Naive thymus-derived CD4-positive, alpha-beta T cell (primary cell): ENCODE measurements at regions of chr20 and their contacts with region 1.

Region 1: DNA sequence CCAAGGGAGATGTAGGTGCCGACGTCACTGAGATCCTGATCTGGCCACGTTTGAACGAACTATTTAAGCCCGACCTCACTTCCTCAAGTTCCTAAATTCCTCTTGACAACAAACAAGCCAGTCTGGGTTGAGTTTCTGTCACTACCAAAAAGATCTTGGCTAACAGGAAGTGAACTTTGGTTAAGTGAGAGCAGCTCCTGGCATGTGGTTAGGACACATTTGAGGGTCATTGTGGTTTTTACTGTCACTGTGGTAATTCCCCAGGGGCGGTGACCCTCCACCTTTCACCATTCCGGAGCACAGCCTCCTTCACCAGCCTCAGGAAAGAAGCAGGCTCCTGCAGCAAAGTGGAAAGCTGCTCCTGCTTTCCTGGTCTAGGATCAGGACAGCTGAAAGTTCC is 43.1 kb upstream of the ZNF831 start:
- DNase-seq: peak in 7 of 9 donors; percentile 23 to 48 (median 35)
- ATAC-seq: peak; percentile 40
- H3K4me3 ChIP-seq: no peak overlapping the region
- H3K4me3 Mint-ChIP-seq: peak overlapping the region; percentile 33 to 96 (median 56)
- H3K27ac ChIP-seq: peak overlapping the region; percentile 94
- H3K27ac Mint-ChIP-seq: peak overlapping the region; percentile 64 to 100 (median 100)
- H3K4me1 ChIP-seq: peaks cover 60 to 84% of the 10 kb centered on the region in 2 donors
- H3K4me1 Mint-ChIP-seq: peaks cover 51 to 98% (median 90%) of the 10 kb centered on the region in 7 donors
- H3K27me3 ChIP-seq: no peaks in the 10 kb centered on the region
- H3K27me3 Mint-ChIP-seq: no peaks in the 10 kb centered on the region

Region 2: DNA sequence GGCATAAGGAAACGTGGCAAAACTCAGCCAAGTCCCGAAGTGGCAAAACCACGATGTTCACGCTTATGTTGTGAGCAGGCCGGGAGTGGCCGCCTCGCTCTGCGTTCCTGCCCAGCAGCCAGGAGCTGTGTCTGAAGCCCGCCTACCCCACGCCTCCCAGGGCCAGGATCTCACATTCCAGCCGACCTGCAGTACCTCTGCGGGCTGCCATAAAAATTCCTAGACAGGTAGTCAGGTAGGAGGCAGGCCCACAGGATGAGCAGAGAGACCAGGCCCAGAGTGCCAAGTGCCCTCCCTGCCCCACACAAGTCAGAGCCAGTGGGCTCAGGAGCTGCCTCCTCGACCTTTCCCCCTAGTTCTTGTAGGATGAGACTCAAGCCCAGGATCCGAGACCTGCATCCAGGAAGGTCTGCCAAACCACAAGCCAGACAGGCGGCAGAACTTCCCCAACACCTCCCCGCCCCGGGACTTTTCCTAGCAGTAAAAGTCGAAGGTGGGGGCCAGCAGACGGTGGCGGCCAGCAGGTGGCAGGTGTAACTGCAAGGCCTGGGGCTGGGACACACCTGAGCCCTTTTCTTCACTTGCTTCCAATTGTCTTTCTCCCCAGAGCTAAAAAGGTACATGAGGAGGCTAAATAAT is 1427.4 kb before region 1 on chr20:
- CTCF ChIA-PET with region 1: no interaction called
- POLR2A ChIA-PET with region 1: no interaction called
- intact Hi-C with region 1: no loop called
- DNase-seq: no peak
- ATAC-seq: no peak
- H3K4me3 ChIP-seq: no peak overlapping the region
- H3K4me3 Mint-ChIP-seq: no peak overlapping the region
- H3K27ac ChIP-seq: no peak overlapping the region
- H3K27ac Mint-ChIP-seq: peak overlapping the region in 1 of 9 donors; percentile 41
- H3K4me1 ChIP-seq: no peaks in the 10 kb centered on the region
- H3K4me1 Mint-ChIP-seq: peaks cover 0 to 38% (median 5%) of the 10 kb centered on the region in 7 donors
- H3K27me3 ChIP-seq: no peaks in the 10 kb centered on the region
- H3K27me3 Mint-ChIP-seq: peaks cover 0 to 4% (median 0%) of the 10 kb centered on the region in 5 donors

Region 3: DNA sequence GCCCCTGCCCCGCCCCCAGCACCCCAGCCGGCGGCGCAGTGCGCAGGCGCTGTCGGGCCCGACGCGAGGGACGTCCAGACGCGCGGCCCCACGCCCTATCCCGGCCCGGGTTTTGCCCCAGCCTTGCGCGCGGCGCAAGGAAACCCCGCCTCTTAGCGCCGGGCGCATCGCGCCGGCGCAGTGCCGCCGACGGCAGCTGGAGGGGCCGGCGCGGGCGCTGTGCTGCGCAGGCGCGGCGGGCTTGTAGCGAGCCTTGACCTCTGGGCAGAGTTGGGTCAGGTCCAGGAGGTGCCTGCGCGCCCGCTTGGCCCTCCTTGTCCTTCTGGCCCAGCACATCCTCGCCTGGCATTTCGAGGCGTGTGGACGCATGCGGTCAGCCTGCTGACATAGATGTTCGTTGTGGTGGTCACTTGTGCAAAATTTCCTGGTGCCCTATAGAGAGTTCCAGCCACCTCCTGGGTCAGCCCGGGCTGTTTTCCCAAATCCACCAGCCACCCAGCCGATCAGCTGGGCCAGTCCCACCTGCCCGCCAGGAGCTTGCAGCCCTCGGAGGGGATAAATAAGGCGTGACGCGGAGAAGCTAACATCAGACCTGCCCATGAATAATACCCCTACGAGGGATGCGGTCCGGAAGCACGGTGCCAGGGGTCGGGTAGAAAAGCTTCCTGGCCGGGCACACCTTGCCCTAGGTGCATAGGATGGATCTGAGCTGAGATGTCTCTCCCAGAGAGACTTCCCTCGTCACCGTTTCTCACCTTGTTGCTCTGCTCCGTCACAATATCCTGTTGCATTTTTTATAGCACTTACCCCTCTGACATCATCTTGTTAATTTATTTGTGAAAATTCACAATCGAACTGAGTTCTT is 77.5 kb before region 1 on chr20:
- CTCF ChIA-PET with region 1: no interaction called
- POLR2A ChIA-PET with region 1: interaction called, 3 read pairs
- intact Hi-C with region 1: loop called in 1 of 2 experiments (anchors 2 kb)
- DNase-seq: peak; percentile 90 to 98 (median 94)
- ATAC-seq: peak; percentile 98
- H3K4me3 ChIP-seq: peak overlapping the region; percentile 76
- H3K4me3 Mint-ChIP-seq: peak overlapping the region; percentile 81 to 96 (median 90)
- H3K27ac ChIP-seq: peak overlapping the region; percentile 93
- H3K27ac Mint-ChIP-seq: peak overlapping the region; percentile 76 to 96 (median 91)
- H3K4me1 ChIP-seq: peaks cover 30 to 32% of the 10 kb centered on the region in 2 donors
- H3K4me1 Mint-ChIP-seq: peaks cover 35 to 54% (median 50%) of the 10 kb centered on the region in 7 donors
- H3K27me3 ChIP-seq: no peaks in the 10 kb centered on the region
- H3K27me3 Mint-ChIP-seq: no peaks in the 10 kb centered on the region

Region 4: DNA sequence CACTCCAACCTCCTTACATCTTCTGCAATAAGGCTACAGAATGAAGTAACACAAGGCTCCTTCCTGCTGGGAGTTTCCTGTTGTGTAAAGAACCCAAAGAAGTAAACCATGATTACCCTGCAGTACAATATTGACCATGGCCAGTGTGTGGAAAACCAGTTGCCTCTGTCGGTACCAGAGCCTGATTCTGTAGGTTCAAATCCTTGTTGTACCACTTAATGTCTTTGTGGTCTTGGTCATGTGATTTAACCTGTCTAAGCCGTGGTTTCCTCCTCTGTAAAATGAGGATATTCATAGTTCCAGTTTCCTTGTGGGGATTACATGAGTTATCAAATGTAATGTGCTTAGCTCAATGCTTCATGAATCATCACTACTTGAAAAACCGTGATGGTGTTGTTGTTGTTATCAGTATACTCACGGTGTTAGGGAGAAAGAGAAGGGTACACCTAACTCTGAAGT is 17.6 kb before region 1 on chr20:
- CTCF ChIA-PET with region 1: interaction called, 3 read pairs
- POLR2A ChIA-PET with region 1: interaction called, 12 read pairs
- intact Hi-C with region 1: no loop called
- DNase-seq: no peak
- ATAC-seq: peak; percentile 40
- H3K4me3 ChIP-seq: no peak overlapping the region
- H3K4me3 Mint-ChIP-seq: no peak overlapping the region
- H3K27ac ChIP-seq: no peak overlapping the region
- H3K27ac Mint-ChIP-seq: peak overlapping the region in 2 of 9 donors; percentile 26 to 29
- H3K4me1 ChIP-seq: peaks cover 0 to 7% of the 10 kb centered on the region in 2 donors
- H3K4me1 Mint-ChIP-seq: peaks cover 12 to 27% (median 24%) of the 10 kb centered on the region in 7 donors
- H3K27me3 ChIP-seq: no peaks in the 10 kb centered on the region
- H3K27me3 Mint-ChIP-seq: peaks cover 0 to 19% (median 0%) of the 10 kb centered on the region in 5 donors

Region 5: DNA sequence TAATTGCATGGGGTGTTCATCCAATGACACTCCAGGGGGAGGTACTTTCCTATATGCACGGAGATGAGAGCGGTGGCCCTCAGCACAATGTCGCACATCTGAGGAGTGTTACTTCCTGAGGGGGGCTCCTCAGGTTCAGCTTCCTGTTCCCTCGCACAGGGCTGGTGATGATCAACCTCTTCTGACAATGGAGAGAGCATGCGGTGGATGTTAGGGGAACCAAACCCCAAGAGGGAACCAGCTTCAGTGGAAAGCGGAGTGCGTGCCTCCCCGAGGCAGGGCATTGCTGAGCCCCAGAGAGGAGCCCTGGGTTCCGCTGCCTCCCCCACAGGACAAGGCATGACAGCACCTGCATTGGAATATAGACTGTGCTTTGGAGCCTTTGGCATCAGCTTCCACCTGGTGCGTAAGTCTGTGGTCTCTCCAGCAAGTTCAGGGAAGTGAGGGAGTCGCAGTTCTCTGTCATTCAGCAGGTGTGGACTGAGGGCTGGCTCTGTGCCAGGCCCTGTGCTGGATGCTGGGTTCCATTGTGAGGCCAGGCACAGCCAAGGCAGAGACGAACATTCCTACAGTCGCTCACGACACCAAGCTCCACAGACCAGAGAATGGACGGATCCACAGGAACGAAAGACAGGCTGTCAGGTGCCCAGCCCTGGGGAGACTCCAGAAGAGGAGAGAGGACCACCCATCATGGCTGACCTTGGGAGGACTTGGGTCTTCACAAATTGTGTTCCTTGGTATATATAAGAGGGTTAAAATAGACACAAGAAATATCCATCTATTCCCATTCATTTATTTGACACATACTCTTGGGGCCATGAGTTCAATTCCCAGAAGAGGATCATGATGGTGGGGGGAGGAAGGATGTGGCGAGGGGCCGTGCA is 39.2 kb after region 1 on chr20:
- CTCF ChIA-PET with region 1: interaction called, 13 read pairs
- POLR2A ChIA-PET with region 1: interaction called, 172 read pairs
- intact Hi-C with region 1: loop called (anchors 1 to 2 kb)
- DNase-seq: peak in 8 of 9 donors; percentile 50 to 86 (median 82)
- ATAC-seq: peak; percentile 93
- H3K4me3 ChIP-seq: peak overlapping the region; percentile 55
- H3K4me3 Mint-ChIP-seq: peak overlapping the region; percentile 76 to 93 (median 89)
- H3K27ac ChIP-seq: peak overlapping the region; percentile 93
- H3K27ac Mint-ChIP-seq: peak overlapping the region; percentile 95 to 99 (median 98)
- H3K4me1 ChIP-seq: peaks cover 55 to 79% of the 10 kb centered on the region in 2 donors
- H3K4me1 Mint-ChIP-seq: peaks cover 49 to 95% (median 89%) of the 10 kb centered on the region in 7 donors
- H3K27me3 ChIP-seq: no peaks in the 10 kb centered on the region
- H3K27me3 Mint-ChIP-seq: no peaks in the 10 kb centered on the region

Region 6: GRCh38 chr20:59207742-59208357 is 87.4 kb after region 1 on chr20:
- CTCF ChIA-PET with region 1: interaction called, 31 read pairs
- POLR2A ChIA-PET with region 1: interaction called, 33 read pairs
- intact Hi-C with region 1: loop called in 1 of 2 experiments (anchors 1 kb)
- DNase-seq: peak; percentile 62 to 82 (median 78)
- ATAC-seq: peak; percentile 98
- H3K4me3 ChIP-seq: no peak overlapping the region
- H3K4me3 Mint-ChIP-seq: peak overlapping the region in 3 of 10 donors; percentile 8 to 35 (median 12)
- H3K27ac ChIP-seq: no peak overlapping the region
- H3K27ac Mint-ChIP-seq: peak overlapping the region in 8 of 9 donors; percentile 63 to 93 (median 84)
- H3K4me1 ChIP-seq: peaks cover 7 to 18% of the 10 kb centered on the region in 2 donors
- H3K4me1 Mint-ChIP-seq: peaks cover 13 to 47% (median 42%) of the 10 kb centered on the region in 7 donors
- H3K27me3 ChIP-seq: no peaks in the 10 kb centered on the region
- H3K27me3 Mint-ChIP-seq: no peaks in the 10 kb centered on the region

Region 7: DNA sequence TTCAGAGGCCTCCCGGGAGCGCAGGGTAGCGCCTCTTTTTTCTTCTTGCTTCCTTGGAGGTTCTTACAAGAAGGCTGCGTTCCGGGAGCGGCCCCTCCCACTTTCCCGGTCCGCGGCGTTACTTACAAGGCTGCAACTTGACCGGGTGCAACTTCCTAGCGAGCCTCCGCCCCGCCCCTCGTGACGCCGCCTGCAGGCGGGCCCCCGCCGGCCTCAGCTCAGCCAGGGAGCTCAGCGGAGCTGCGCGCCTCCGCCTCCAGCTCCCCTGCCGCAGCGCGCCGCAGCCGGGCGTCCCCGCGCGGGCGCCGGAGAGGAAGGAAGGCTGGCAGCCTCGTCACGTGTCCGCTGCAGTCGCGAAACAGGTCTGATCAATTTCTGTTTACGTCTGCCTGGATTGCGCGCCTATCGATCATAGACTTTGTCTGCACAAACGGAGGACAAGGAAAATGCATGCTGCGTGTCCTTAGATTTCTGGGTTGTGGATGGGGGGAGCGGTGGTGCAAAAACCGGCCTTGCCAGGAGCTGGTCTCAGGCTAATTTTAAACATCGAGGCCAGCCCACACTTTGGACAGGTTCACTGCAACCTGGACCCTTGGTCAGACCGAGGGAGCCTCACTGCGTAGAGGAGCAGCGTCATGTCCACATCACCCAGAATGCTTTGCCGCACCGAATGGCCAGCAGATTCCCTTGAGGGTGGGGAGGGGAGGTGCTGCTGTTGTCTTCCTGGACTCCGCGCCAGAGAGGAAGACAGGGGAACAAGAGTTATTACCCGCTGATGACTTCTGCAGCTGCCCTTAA is 819.9 kb after region 1 on chr20 and contains the starts of genes FAM217B and PPP1R3D:
- CTCF ChIA-PET with region 1: no interaction called
- POLR2A ChIA-PET with region 1: no interaction called
- intact Hi-C with region 1: no loop called
- DNase-seq: peak; percentile 82 to 95 (median 86)
- ATAC-seq: peak; percentile 98
- H3K4me3 ChIP-seq: peak within 1 kb of the TSS; percentile 99
- H3K4me3 Mint-ChIP-seq: peak within 1 kb of the TSS; percentile 96 to 99 (median 98)
- H3K27ac ChIP-seq: peak within 1 kb of the TSS; percentile 79
- H3K27ac Mint-ChIP-seq: peak within 1 kb of the TSS; percentile 95 to 99 (median 97)
- H3K4me1 ChIP-seq: peaks cover 17 to 23% of the 10 kb centered on the region in 2 donors
- H3K4me1 Mint-ChIP-seq: peaks cover 29 to 65% (median 49%) of the 10 kb centered on the region in 7 donors
- H3K27me3 ChIP-seq: no peaks in the 10 kb centered on the region
- H3K27me3 Mint-ChIP-seq: no peaks in the 10 kb centered on the region
- total RNA-seq, gene FAM217B: 19.3 to 47.4 (median 32.6) TPM
- total RNA-seq, gene PPP1R3D: 4.1 to 11.8 (median 7.5) TPM

Region 8: GRCh38 chr20:61044493-61044892 is 1924.0 kb after region 1 on chr20:
- CTCF ChIA-PET with region 1: no interaction called
- POLR2A ChIA-PET with region 1: no interaction called
- intact Hi-C with region 1: no loop called
- DNase-seq: no peak
- ATAC-seq: no peak
- H3K4me3 ChIP-seq: no peak overlapping the region
- H3K4me3 Mint-ChIP-seq: no peak overlapping the region
- H3K27ac ChIP-seq: no peak overlapping the region
- H3K27ac Mint-ChIP-seq: no peak overlapping the region
- H3K4me1 ChIP-seq: no peaks in the 10 kb centered on the region
- H3K4me1 Mint-ChIP-seq: no peaks in the 10 kb centered on the region
- H3K27me3 ChIP-seq: no peaks in the 10 kb centered on the region
- H3K27me3 Mint-ChIP-seq: peaks cover 0 to 6% (median 0%) of the 10 kb centered on the region in 5 donors